Head of caudate nucleus (tissue), 42 donors: ENCODE measurements at regions of chr12 and their contacts with region 1.

Region 1: GRCh38 chr12:49130151-49131050 is 794 bp downstream of the TUBA1B start:
- DNase-seq: peak; percentile 85 to 98 (median 93)

Region 2: DNA sequence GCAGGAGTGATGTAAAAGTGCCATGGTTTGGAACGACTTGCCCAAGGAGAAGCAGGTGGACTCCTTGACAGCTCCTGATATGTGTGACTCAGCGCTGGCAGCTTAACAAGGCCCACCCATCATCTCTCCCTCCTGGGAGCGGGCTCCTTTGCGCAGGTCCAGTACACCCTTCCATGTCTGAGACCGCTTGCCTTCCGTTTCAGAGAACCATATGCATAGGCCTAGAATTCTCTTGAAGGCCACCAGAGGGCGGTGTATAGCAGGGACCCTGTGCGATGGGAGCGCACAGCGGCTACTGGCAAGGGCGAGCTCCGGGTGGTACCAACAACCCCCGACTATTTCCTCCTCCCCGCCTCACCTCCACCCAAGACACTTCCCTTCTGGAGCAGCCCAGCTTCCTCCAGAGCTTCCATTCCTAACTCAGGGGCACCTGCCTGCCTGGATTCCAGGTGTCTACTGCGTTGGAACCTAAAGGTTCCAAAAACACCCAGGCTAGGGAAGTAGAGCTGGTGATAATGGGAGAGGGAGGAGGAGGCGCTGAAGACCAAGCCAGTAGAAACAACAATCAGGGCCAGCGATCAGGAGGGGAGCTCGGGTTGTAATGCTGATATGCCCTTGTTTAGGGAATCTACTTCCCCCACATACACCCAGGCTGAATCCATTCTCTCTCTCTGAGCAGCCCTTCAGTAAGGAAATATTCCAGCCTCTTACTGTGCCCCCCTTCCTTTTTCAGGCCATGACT is 42.0 kb before region 1 on chr12:
- intact Hi-C with region 1: loop called (anchors 5 kb)
- DNase-seq: peak; percentile 62 to 94 (median 84)

Region 3: DNA sequence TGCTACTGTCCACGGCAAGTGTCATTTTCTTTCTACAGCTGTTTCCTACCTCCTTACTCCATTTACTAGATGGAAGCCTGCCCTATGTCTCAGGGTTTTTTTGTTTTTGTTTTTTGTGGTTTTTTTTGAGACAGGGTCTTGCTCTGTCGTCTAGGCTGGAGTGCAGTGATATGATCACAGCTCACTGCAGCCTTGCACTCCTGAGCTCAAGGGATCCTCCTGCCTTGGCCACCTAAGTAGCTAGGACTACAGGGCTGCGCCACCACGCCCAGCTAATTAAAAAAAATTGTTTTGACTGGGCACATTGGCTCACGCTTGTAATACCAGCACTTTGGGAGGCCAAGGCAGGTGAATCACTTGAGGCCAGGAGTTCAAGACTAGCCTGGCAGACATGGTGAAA is 43.8 kb after region 1 on chr12:
- intact Hi-C with region 1: no loop called
- DNase-seq: no peak

Region 4: DNA sequence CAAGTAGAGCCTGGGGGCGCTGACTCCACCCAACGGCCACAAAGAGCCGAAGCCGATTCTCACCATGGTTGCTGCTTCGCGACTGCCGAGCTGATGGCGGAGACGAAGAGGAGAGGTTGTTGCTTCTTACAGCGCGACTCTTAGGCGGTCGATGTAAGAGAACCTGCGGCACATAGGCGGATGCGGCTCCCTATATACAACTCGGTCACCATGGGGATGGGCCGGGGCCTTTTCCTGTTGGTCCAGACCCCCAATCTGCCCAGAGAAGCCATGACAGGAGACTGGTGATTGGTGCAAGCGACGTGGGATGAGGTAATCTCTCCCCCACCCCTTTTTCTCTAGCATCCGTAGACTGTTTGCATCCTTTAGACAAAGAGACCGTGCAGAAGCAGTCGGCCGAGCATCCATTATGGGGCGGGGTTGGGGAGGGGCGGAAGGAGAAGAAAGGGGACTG is 58.5 kb after region 1 on chr12 and contains the start of gene TUBA1A:
- intact Hi-C with region 1: loop called (anchors 1 kb)
- DNase-seq: peak; percentile 93 to 100 (median 99)

Region 5: DNA sequence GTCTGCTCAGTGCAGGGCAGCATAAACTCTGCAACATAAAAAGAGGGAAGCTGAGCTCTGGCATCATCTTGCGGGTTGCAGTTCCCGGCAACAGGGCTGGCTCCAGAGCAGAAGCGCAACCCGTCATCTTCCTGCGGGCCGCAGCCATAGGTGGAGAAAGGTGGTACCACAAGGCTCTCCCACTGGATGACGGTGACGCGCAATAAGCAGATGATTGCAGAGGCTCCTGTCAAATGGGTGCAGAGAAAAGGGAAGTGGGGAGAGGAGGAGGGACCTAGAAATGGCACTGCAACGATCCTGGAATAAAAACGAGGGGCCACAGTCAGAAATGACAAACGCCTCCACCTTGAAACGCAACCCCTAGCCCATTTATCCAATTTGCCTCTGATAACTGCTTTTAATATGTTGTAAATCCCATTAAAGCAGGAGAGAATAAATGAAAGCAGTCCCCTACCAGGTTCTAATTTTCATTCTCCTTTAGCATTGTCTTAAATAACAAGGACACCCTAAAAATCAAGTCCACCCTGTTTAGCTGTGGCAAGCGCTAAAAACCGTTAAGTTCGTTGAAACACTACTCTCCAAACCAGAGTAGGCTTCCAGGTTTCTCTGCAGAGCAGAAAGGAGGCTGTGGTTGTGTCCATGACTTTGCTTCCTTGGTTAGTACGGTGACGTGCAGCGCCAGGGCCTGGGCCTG is 103.6 kb after region 1 on chr12:
- intact Hi-C with region 1: loop called (anchors 1 kb)
- DNase-seq: peak; percentile 71 to 96 (median 86)